Activated CD4-positive, alpha-beta memory T cell treated with anti-CD3 and anti-CD28 coated beads for 36 hours (primary cell): ENCODE measurements at regions of chr4 and their contacts with region 1.

Region 1: DNA sequence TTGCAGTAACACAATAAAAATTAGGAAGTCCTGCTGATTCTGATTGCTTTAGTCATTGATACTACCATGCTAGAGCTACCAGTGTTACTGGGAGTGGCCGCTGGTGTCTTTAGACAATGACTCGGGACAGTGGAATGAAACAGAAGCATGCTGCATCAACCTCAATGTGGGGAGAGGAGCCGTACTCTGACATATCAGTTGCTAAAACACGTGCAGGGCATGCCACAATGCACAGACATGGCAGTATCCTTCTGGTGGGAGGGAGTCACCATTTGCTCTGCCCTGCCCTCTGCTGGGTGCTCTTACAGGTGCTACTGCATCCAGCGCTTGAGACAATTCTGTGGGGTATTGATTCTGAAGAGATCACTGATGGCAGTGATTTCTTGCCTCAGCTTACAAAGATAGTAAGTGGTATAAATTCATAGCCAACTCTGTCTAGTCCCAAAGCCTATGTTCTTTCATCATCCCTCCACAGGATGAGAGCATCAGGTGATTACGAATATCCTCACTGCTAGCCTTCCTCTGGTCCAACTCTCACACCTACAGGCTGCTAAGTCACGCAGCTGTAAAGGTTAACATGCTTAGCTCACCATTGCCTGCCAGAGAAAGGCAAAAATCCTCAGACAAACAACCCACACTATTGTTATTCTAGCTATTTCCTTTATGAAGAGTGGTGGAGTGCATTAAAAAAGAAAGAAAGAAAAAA is 43.7 kb downstream of the NSG1 start:
- DNase-seq: peak; percentile 73
- H3K4me3 Mint-ChIP-seq: no peak overlapping the region
- H3K27ac Mint-ChIP-seq: no peak overlapping the region
- H3K4me1 Mint-ChIP-seq: peaks cover 13% of the 10 kb centered on the region
- H3K27me3 Mint-ChIP-seq: no peaks in the 10 kb centered on the region

Region 2: GRCh38 chr4:4368809-4369580 is 61.6 kb before region 1 on chr4:
- CTCF ChIA-PET with region 1: no interaction called
- POLR2A ChIA-PET with region 1: no interaction called
- intact Hi-C with region 1: no loop called
- DNase-seq: no peak
- H3K4me3 Mint-ChIP-seq: no peak overlapping the region
- H3K27ac Mint-ChIP-seq: no peak overlapping the region
- H3K4me1 Mint-ChIP-seq: no peaks in the 10 kb centered on the region
- H3K27me3 Mint-ChIP-seq: no peaks in the 10 kb centered on the region

Region 3: DNA sequence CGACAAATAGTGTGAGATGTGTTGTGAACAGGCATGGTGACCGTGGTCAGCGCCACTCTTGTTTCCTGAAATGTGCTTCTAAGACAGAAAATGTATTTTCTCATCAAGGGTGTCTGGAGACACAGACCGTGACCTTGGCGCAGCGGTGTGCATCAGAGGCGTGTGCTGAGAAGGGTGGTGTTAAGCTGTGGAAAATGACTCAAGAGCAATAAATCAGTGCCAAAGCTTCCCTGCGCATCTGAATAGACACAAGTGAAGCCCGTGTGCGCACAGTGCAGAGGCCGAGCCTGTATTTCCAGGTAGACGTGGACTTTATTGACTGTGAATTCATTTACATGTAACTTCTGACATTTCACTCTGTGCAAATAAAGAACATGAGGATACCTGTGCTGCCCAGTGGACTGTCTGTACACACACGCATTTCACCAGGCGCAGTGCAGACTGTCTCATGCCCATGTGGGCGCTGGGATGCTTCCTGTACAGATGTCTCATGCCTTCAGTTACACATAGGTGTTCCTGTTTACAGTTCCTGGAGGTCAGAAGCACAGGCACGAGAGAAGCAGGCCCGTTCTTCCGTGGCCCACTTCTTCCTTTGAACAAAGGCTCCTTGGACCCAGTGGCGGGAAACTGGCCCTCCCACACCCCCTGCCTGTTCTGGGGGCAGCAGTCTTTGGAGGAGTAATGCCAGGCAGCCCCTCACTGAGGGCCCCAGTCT is 11.8 kb before region 1 on chr4:
- CTCF ChIA-PET with region 1: interaction called, 6 read pairs
- POLR2A ChIA-PET with region 1: no interaction called
- intact Hi-C with region 1: loop called (anchors 1 kb)
- DNase-seq: peak; percentile 55
- H3K4me3 Mint-ChIP-seq: no peak overlapping the region
- H3K27ac Mint-ChIP-seq: peak overlapping the region; percentile 64
- H3K4me1 Mint-ChIP-seq: peaks cover 28% of the 10 kb centered on the region
- H3K27me3 Mint-ChIP-seq: no peaks in the 10 kb centered on the region

Region 4: DNA sequence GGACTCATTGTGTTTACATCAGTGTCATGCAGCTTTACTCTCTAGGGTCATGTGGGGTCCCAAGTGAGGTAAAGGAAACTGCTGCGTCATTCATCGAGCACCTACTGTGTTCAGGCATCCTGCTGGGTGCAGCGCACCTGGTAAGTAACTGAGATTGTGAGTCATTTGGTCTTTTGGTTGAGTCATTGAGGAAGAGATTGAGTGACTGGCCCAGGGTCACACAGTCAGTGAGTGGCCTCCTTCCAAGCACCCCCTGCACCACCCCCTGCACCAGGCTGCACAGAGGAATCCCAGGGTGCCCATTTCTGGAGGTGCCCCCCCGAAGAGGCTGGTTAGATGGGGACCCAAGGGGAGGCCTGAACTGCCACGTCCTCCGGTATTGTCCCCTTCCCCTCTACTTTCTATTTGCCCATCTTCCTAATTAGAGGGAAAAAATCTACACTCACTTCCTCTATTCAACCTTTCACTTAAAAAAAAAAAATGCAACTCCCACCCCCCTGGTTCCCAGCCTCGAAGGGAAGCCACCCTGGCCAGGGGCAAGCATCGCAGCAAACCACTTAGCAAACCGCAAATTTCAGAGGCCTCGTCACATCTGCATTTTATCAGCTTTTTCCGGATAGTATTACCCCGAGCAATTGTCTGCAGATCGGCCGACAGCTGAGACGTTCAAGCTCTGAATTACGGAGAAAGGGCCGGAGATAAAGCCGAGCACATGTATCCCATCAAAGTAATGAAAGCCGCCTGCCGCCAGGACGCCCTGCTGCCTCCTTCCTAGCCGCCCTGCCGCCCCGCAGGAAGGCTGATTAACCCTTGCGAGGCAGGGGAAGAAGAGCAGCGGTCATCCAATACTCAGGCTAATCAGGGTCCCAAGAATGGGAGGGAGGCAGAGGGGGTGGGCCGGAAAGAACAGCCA is 332.5 kb after region 1 on chr4:
- CTCF ChIA-PET with region 1: no interaction called
- POLR2A ChIA-PET with region 1: no interaction called
- intact Hi-C with region 1: no loop called
- DNase-seq: peak; percentile 79
- H3K4me3 Mint-ChIP-seq: peak overlapping the region; percentile 51
- H3K27ac Mint-ChIP-seq: peak overlapping the region; percentile 61
- H3K4me1 Mint-ChIP-seq: peaks cover 25% of the 10 kb centered on the region
- H3K27me3 Mint-ChIP-seq: peaks cover 7% of the 10 kb centered on the region